CD8-positive, alpha-beta memory T cell (primary cell): ENCODE measurements at regions of chr11 and their contacts with region 1.

Region 1: GRCh38 chr11:14643697-14644225 is at the start of gene PDE3B:
- DNase-seq: peak; percentile 62 to 83 (median 70)
- H3K4me3 ChIP-seq: peak within 1 kb of the TSS; percentile 79
- H3K4me3 Mint-ChIP-seq: peak within 1 kb of the TSS; percentile 88 to 96 (median 92)
- H3K27ac ChIP-seq: peak within 1 kb of the TSS; percentile 77
- H3K27ac Mint-ChIP-seq: peak within 1 kb of the TSS; percentile 80 to 94 (median 90)
- H3K4me1 ChIP-seq: peaks cover 40% of the 10 kb centered on the region
- H3K4me1 Mint-ChIP-seq: peaks cover 57 to 70% (median 57%) of the 10 kb centered on the region in 3 donors
- H3K27me3 ChIP-seq: no peaks in the 10 kb centered on the region
- H3K27me3 Mint-ChIP-seq: peaks cover 2 to 6% of the 10 kb centered on the region in 2 donors
- total RNA-seq, gene PDE3B: 47.0 to 47.2 TPM

Region 2: GRCh38 chr11:14499554-14500180 is 144.1 kb before region 1 on chr11 and contains the start of gene COPB1:
- CTCF ChIA-PET with region 1: interaction called, 12 read pairs
- POLR2A ChIA-PET with region 1: interaction called, 3 read pairs
- DNase-seq: peak; percentile 88 to 95 (median 93)
- H3K4me3 ChIP-seq: peak within 1 kb of the TSS; percentile 93
- H3K4me3 Mint-ChIP-seq: peak within 1 kb of the TSS; percentile 90 to 99 (median 95)
- H3K27ac ChIP-seq: peak within 1 kb of the TSS; percentile 81
- H3K27ac Mint-ChIP-seq: peak within 1 kb of the TSS; percentile 96 to 100 (median 98)
- H3K4me1 ChIP-seq: peaks cover 21% of the 10 kb centered on the region
- H3K4me1 Mint-ChIP-seq: peaks cover 45 to 56% (median 53%) of the 10 kb centered on the region in 3 donors
- H3K27me3 ChIP-seq: no peaks in the 10 kb centered on the region
- H3K27me3 Mint-ChIP-seq: no peaks in the 10 kb centered on the region
- total RNA-seq, gene COPB1: 104 to 111 TPM

Region 3: DNA sequence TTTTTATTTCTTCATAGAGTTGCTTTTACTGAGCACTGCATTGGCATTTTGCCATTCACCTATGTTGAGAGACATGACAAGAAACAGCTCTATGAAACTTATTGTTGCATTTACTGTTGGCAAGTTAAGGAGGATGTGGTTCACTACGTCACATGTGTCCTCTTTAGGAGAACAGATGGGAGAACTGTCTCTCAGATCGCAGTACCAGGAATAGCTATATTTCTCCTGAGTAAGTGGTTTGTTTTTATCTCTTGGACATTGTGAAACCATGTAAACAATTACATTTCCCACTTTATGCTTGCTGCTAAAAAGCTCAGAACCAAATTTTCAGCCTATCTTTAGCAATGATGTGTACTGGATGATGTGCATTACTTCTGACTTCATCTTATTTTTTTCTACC is 88.8 kb before region 1 on chr11:
- CTCF ChIA-PET with region 1: interaction called, 20 read pairs
- POLR2A ChIA-PET with region 1: interaction called, 9 read pairs
- DNase-seq: peak in 2 of 5 donors; percentile 74 to 84
- H3K4me3 ChIP-seq: peak overlapping the region; percentile 13
- H3K4me3 Mint-ChIP-seq: peak overlapping the region in 6 of 7 donors; percentile 7 to 66 (median 34)
- H3K27ac ChIP-seq: no peak overlapping the region
- H3K27ac Mint-ChIP-seq: peak overlapping the region; percentile 60 to 90 (median 88)
- H3K4me1 ChIP-seq: peaks cover 35% of the 10 kb centered on the region
- H3K4me1 Mint-ChIP-seq: peaks cover 21 to 54% (median 32%) of the 10 kb centered on the region in 3 donors
- H3K27me3 ChIP-seq: no peaks in the 10 kb centered on the region
- H3K27me3 Mint-ChIP-seq: peaks cover 0 to under 1% of the 10 kb centered on the region in 2 donors

Region 4: DNA sequence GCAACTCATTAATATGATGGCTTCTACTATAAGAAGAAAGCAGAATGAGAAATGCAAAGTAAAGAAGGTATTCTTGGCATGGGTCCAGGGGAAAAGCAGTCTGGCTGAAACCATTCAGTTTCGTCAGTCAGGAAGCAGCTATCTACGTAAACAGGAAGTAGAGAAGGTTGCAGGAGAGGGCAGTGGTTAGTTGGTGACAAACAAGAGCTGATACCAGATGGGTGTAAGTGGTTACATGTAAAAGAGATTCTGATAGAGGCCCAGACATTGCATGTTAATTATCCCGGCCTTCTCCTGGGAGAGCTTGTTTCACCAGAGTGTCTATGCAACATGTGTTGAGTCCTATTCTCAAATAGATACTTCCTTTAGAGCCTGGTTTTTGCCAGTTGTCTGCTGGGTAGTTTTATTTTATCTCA is 65.2 kb before region 1 on chr11:
- CTCF ChIA-PET with region 1: interaction called, 26 read pairs
- POLR2A ChIA-PET with region 1: interaction called, 53 read pairs
- DNase-seq: peak; percentile 46 to 93 (median 83)
- H3K4me3 ChIP-seq: peak overlapping the region; percentile 14
- H3K4me3 Mint-ChIP-seq: peak overlapping the region; percentile 6 to 80 (median 58)
- H3K27ac ChIP-seq: peak overlapping the region; percentile 62
- H3K27ac Mint-ChIP-seq: peak overlapping the region; percentile 79 to 99 (median 98)
- H3K4me1 ChIP-seq: peaks cover 44% of the 10 kb centered on the region
- H3K4me1 Mint-ChIP-seq: peaks cover 60 to 83% (median 67%) of the 10 kb centered on the region in 3 donors
- H3K27me3 ChIP-seq: no peaks in the 10 kb centered on the region
- H3K27me3 Mint-ChIP-seq: no peaks in the 10 kb centered on the region

Region 5: GRCh38 chr11:14705067-14705466 is 61.3 kb after region 1 on chr11:
- CTCF ChIA-PET with region 1: no interaction called
- POLR2A ChIA-PET with region 1: no interaction called
- DNase-seq: no peak
- H3K4me3 ChIP-seq: no peak overlapping the region
- H3K4me3 Mint-ChIP-seq: no peak overlapping the region
- H3K27ac ChIP-seq: no peak overlapping the region
- H3K27ac Mint-ChIP-seq: no peak overlapping the region
- H3K4me1 ChIP-seq: peaks cover 14% of the 10 kb centered on the region
- H3K4me1 Mint-ChIP-seq: peaks cover 37 to 52% (median 50%) of the 10 kb centered on the region in 3 donors
- H3K27me3 ChIP-seq: no peaks in the 10 kb centered on the region
- H3K27me3 Mint-ChIP-seq: no peaks in the 10 kb centered on the region

Region 6: DNA sequence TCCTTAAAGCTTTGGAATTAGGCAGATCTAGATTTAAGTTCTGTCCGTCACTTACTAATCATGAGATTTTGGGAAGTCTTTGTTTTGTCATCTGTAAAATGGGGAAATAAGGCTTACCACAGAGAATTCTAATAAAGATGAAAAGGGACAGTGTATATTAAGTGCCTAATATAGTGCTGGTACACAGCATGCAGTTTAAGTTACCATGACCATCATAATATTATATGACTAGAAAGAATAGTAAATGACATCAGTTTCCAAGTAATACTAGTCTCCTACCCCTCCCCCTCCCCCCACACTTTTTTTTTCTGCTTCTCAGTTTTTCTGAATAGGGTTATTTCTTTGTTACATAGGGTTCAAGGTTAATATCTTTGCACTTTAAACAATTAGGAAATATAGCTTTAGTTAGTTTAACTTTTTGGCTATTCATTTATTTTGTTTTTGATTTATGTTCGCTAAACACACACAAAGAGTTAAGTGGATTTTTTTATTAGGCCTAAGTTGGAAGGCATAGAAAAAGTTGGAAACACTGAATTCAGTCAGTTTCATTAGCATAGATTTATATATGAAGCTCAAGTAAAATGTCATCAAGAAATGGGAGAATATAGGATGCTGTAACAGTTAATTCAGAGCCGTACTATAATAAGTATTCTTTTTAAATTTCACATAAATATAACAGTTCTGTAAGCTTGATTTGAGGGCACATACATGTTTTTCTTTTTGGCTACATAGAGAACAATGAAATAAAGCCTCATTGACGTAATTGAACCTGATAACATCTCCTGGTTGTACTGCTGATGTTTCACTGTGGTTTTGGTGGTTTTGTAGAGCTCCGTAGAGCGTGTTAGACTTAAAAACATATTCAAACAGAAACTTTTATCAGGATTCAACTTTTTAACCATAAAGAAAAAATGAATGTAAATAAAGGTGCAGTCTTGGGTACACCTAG is 121.1 kb after region 1 on chr11:
- CTCF ChIA-PET with region 1: interaction called, 18 read pairs
- POLR2A ChIA-PET with region 1: interaction called, 25 read pairs
- DNase-seq: peak in 4 of 5 donors; percentile 31 to 92 (median 79)
- H3K4me3 ChIP-seq: peak overlapping the region; percentile 1
- H3K4me3 Mint-ChIP-seq: peak overlapping the region in 6 of 7 donors; percentile 37 to 76 (median 64)
- H3K27ac ChIP-seq: no peak overlapping the region
- H3K27ac Mint-ChIP-seq: peak overlapping the region in 1 of 8 donors; percentile 48
- H3K4me1 ChIP-seq: peaks cover 82% of the 10 kb centered on the region
- H3K4me1 Mint-ChIP-seq: peaks cover 29 to 39% (median 34%) of the 10 kb centered on the region in 3 donors
- H3K27me3 ChIP-seq: no peaks in the 10 kb centered on the region
- H3K27me3 Mint-ChIP-seq: no peaks in the 10 kb centered on the region

Region 7: DNA sequence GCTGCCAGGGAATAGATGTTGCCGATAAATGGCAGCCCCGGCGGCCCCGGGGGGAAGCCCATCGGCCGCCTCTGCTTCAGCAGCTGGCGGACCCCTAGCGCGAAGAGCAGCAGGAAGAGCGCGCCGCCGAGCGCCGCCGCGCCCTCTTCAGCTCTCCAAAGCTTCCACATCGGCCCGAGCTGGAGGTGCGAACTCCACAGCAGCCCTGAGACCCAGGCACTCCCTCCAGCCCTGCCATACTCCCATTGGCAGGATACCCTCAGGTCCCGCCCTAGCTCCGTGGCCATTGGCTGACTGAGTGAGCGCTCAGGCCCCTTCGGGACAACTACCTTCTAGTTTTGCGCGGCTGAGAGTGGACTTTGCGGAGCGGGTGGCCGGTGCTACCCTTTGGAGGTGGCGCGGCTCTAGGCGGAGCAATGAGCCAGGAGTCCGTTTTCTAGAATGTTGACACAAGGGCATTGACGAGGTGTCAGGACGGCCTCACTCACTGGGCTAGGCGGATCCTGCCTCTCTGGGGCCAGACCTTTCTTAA is 248.3 kb after region 1 on chr11 and contains the start of gene CYP2R1:
- CTCF ChIA-PET with region 1: interaction called, 14 read pairs
- POLR2A ChIA-PET with region 1: interaction called, 17 read pairs
- DNase-seq: peak; percentile 81 to 92 (median 89)
- H3K4me3 ChIP-seq: peak within 1 kb of the TSS; percentile 90
- H3K4me3 Mint-ChIP-seq: peak within 1 kb of the TSS; percentile 92 to 98 (median 97)
- H3K27ac ChIP-seq: peak within 1 kb of the TSS; percentile 83
- H3K27ac Mint-ChIP-seq: peak within 1 kb of the TSS; percentile 91 to 99 (median 97)
- H3K4me1 ChIP-seq: peaks cover 23% of the 10 kb centered on the region
- H3K4me1 Mint-ChIP-seq: peaks cover 25 to 44% (median 39%) of the 10 kb centered on the region in 3 donors
- H3K27me3 ChIP-seq: no peaks in the 10 kb centered on the region
- H3K27me3 Mint-ChIP-seq: peaks cover 0 to 2% of the 10 kb centered on the region in 2 donors
- total RNA-seq, gene CYP2R1: 5.6 to 5.9 TPM